Naive thymus-derived CD4-positive, alpha-beta T cell (primary cell): ENCODE measurements at regions of chr1 and their contacts with region 1.

Region 1: GRCh38 chr1:240455228-240455821 is 156.6 kb downstream of the GREM2 start:
- DNase-seq: peak in 2 of 9 donors; percentile 7 to 14
- ATAC-seq: peak; percentile 53
- H3K4me3 ChIP-seq: no peak overlapping the region
- H3K4me3 Mint-ChIP-seq: no peak overlapping the region
- H3K27ac ChIP-seq: no peak overlapping the region
- H3K27ac Mint-ChIP-seq: no peak overlapping the region
- H3K4me1 ChIP-seq: no peaks in the 10 kb centered on the region
- H3K4me1 Mint-ChIP-seq: no peaks in the 10 kb centered on the region
- H3K27me3 ChIP-seq: no peaks in the 10 kb centered on the region
- H3K27me3 Mint-ChIP-seq: no peaks in the 10 kb centered on the region

Region 2: GRCh38 chr1:240149484-240150094 is 305.7 kb before region 1 on chr1:
- CTCF ChIA-PET with region 1: no interaction called
- POLR2A ChIA-PET with region 1: no interaction called
- intact Hi-C with region 1: no loop called
- DNase-seq: peak in 1 of 9 donors; percentile 0
- ATAC-seq: no peak
- H3K4me3 ChIP-seq: no peak overlapping the region
- H3K4me3 Mint-ChIP-seq: no peak overlapping the region
- H3K27ac ChIP-seq: no peak overlapping the region
- H3K27ac Mint-ChIP-seq: no peak overlapping the region
- H3K4me1 ChIP-seq: no peaks in the 10 kb centered on the region
- H3K4me1 Mint-ChIP-seq: no peaks in the 10 kb centered on the region
- H3K27me3 ChIP-seq: no peaks in the 10 kb centered on the region
- H3K27me3 Mint-ChIP-seq: peaks cover 0 to 16% (median 0%) of the 10 kb centered on the region in 5 donors

Region 3: DNA sequence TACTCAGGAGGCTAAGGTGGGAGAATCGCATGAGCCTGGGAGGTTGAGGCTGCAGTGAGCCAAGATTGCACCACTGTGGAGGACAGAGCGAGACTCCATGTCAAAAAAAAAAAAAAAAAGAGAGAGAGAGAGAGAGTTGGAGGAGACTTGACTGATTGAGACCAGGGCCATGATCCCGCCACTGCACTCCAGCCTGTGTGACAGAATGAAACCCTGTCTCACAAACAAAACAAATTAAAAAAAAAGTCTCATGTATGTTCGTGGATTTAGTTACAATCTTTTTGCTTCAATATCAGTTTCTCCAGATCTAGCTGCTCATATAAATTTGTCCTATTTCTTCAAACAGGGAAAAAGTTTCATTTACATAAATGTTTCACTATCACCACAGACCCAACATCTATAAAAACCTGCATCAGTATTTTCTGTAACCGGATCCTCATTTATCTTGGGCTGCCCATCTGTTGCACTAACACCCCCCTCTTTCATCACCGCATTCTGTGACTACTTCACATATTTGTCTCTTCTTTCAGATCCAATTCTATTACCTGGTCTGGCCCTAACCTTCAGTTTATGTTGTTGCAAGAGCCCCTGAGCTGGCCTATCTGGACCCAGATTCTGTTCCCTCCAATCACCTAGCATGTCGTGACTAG is 29.6 kb after region 1 on chr1:
- CTCF ChIA-PET with region 1: no interaction called
- POLR2A ChIA-PET with region 1: no interaction called
- intact Hi-C with region 1: no loop called
- DNase-seq: no peak
- ATAC-seq: no peak
- H3K4me3 ChIP-seq: no peak overlapping the region
- H3K4me3 Mint-ChIP-seq: no peak overlapping the region
- H3K27ac ChIP-seq: no peak overlapping the region
- H3K27ac Mint-ChIP-seq: no peak overlapping the region
- H3K4me1 ChIP-seq: no peaks in the 10 kb centered on the region
- H3K4me1 Mint-ChIP-seq: peaks cover 0 to 2% (median 0%) of the 10 kb centered on the region in 7 donors
- H3K27me3 ChIP-seq: no peaks in the 10 kb centered on the region
- H3K27me3 Mint-ChIP-seq: peaks cover 0 to 3% (median 0%) of the 10 kb centered on the region in 5 donors

Region 4: GRCh38 chr1:240691521-240692338 is 236.4 kb after region 1 on chr1:
- CTCF ChIA-PET with region 1: interaction called, 7 read pairs
- POLR2A ChIA-PET with region 1: no interaction called
- intact Hi-C with region 1: loop called in 1 of 2 experiments (anchors 1 kb)
- DNase-seq: no peak
- ATAC-seq: peak; percentile 40
- H3K4me3 ChIP-seq: no peak overlapping the region
- H3K4me3 Mint-ChIP-seq: no peak overlapping the region
- H3K27ac ChIP-seq: no peak overlapping the region
- H3K27ac Mint-ChIP-seq: no peak overlapping the region
- H3K4me1 ChIP-seq: no peaks in the 10 kb centered on the region
- H3K4me1 Mint-ChIP-seq: peaks cover 4 to 13% (median 9%) of the 10 kb centered on the region in 7 donors
- H3K27me3 ChIP-seq: no peaks in the 10 kb centered on the region
- H3K27me3 Mint-ChIP-seq: peaks cover 0 to 4% (median 4%) of the 10 kb centered on the region in 5 donors

Region 5: GRCh38 chr1:240946926-240947325 is 491.6 kb after region 1 on chr1:
- CTCF ChIA-PET with region 1: no interaction called
- POLR2A ChIA-PET with region 1: no interaction called
- intact Hi-C with region 1: loop called in 1 of 2 experiments (anchors 10 kb)
- DNase-seq: no peak
- ATAC-seq: no peak
- H3K4me3 ChIP-seq: no peak overlapping the region
- H3K4me3 Mint-ChIP-seq: no peak overlapping the region
- H3K27ac ChIP-seq: no peak overlapping the region
- H3K27ac Mint-ChIP-seq: no peak overlapping the region
- H3K4me1 ChIP-seq: no peaks in the 10 kb centered on the region
- H3K4me1 Mint-ChIP-seq: no peaks in the 10 kb centered on the region
- H3K27me3 ChIP-seq: no peaks in the 10 kb centered on the region
- H3K27me3 Mint-ChIP-seq: peaks cover 0 to 4% (median 0%) of the 10 kb centered on the region in 5 donors